CD8-positive, alpha-beta memory T cell (primary cell): ENCODE measurements at regions of chr1 and their contacts with region 1.

Region 1: GRCh38 chr1:175192630-175193526 is at the start of gene KIAA0040:
- DNase-seq: peak; percentile 50 to 68 (median 53)
- H3K4me3 ChIP-seq: peak within 1 kb of the TSS; percentile 95
- H3K4me3 Mint-ChIP-seq: peak within 1 kb of the TSS; percentile 94 to 99 (median 98)
- H3K27ac ChIP-seq: peak within 1 kb of the TSS; percentile 80
- H3K27ac Mint-ChIP-seq: peak within 1 kb of the TSS; percentile 71 to 99 (median 94)
- H3K4me1 ChIP-seq: peaks cover 39% of the 10 kb centered on the region
- H3K4me1 Mint-ChIP-seq: peaks cover 47 to 53% (median 50%) of the 10 kb centered on the region in 3 donors
- H3K27me3 ChIP-seq: no peaks in the 10 kb centered on the region
- H3K27me3 Mint-ChIP-seq: no peaks in the 10 kb centered on the region
- total RNA-seq, gene KIAA0040: 30.4 to 31.8 TPM

Region 2: DNA sequence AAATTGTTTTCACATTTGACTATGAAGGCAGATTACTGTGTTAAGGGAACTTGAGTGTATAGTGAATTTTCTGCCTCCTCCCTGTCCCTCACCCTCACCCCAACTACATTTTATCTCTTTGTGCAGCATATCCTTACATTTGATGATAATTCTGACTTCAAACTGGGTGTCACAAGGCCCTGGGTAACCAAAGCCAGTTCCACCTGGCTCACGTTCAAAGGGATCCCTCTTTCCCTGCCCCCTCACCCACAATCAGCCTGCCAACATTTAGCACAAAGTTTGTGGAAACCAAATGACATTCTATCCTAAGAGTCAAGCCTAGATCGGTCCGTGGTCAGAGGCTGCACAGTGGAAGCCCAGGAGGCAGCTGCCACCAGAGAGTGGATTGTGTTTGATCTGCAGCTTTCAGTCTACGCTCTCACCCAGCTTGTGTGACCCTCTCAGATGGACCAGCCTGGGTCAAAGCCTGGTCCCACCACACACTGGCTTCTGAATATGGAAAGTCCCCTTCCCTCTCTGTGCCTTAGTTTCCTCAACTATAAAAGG is 10.6 kb before region 1 on chr1:
- CTCF ChIA-PET with region 1: no interaction called
- POLR2A ChIA-PET with region 1: no interaction called
- DNase-seq: no peak
- H3K4me3 ChIP-seq: no peak overlapping the region
- H3K4me3 Mint-ChIP-seq: peak overlapping the region in 2 of 7 donors; percentile 8 to 20
- H3K27ac ChIP-seq: no peak overlapping the region
- H3K27ac Mint-ChIP-seq: peak overlapping the region in 2 of 8 donors; percentile 21 to 26
- H3K4me1 ChIP-seq: peaks cover 76% of the 10 kb centered on the region
- H3K4me1 Mint-ChIP-seq: peaks cover 80 to 97% (median 97%) of the 10 kb centered on the region in 3 donors
- H3K27me3 ChIP-seq: no peaks in the 10 kb centered on the region
- H3K27me3 Mint-ChIP-seq: no peaks in the 10 kb centered on the region

Region 3: DNA sequence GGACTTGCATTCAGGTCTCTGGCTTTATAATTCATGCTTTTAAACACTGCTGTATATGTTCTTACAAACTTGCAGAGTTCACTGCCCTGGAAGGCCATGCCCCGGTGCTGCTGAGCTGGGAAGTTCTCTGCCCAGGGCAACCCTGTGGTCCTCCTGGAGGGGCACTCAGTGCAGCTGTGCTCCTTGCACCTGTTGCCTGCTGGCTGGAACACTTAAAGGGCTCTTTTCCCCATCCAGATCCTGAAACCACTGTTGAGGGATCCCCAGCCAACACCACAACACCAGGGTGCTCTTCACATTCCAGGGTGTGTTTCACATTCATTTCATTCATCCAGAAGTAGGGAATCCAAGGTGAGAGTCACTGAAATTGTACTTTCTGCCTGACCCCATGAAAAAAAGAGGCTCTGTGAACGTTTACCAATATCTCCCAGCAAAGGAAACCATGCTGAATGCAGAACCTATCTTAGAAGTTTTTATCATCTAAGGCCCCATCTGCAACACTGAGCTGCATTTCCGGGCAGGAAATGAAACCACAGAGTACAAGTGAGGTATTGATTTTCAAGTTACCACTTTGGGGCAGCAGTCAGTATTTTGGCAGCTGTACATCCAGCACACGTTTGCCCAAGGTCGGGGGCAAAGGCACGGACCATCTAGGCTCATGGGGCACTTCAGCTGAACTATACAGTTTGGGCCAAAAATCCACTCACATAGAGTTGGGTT is 16.1 kb after region 1 on chr1:
- CTCF ChIA-PET with region 1: interaction called, 12 read pairs
- POLR2A ChIA-PET with region 1: interaction called, 14 read pairs
- DNase-seq: peak; percentile 11 to 80 (median 74)
- H3K4me3 ChIP-seq: peak overlapping the region; percentile 44
- H3K4me3 Mint-ChIP-seq: peak overlapping the region; percentile 72 to 92 (median 87)
- H3K27ac ChIP-seq: peak overlapping the region; percentile 43
- H3K27ac Mint-ChIP-seq: peak overlapping the region; percentile 80 to 97 (median 94)
- H3K4me1 ChIP-seq: peaks cover 61% of the 10 kb centered on the region
- H3K4me1 Mint-ChIP-seq: peaks cover 62 to 85% (median 76%) of the 10 kb centered on the region in 3 donors
- H3K27me3 ChIP-seq: no peaks in the 10 kb centered on the region
- H3K27me3 Mint-ChIP-seq: no peaks in the 10 kb centered on the region

Region 4: GRCh38 chr1:175419744-175420546 is 227.1 kb after region 1 on chr1:
- CTCF ChIA-PET with region 1: no interaction called
- POLR2A ChIA-PET with region 1: no interaction called
- DNase-seq: no peak
- H3K4me3 ChIP-seq: no peak overlapping the region
- H3K4me3 Mint-ChIP-seq: no peak overlapping the region
- H3K27ac ChIP-seq: no peak overlapping the region
- H3K27ac Mint-ChIP-seq: no peak overlapping the region
- H3K4me1 ChIP-seq: no peaks in the 10 kb centered on the region
- H3K4me1 Mint-ChIP-seq: no peaks in the 10 kb centered on the region
- H3K27me3 ChIP-seq: no peaks in the 10 kb centered on the region
- H3K27me3 Mint-ChIP-seq: peaks cover 12 to 41% of the 10 kb centered on the region in 2 donors